ENCODE measurements at regions of chr4 and their contacts with region 1.

Region 1: GRCh38 chr4:40038972-40039371 is 17.7 kb upstream of the N4BP2 start:
- DNase-seq: no peak

Region 2: GRCh38 chr4:39855909-39856512 is 183.0 kb before region 1 on chr4:
- CTCF ChIA-PET with region 1: no interaction called
- POLR2A ChIA-PET with region 1: no interaction called
- DNase-seq: no peak

Region 3: GRCh38 chr4:40016007-40016406 is 23.0 kb before region 1 on chr4:
- CTCF ChIA-PET with region 1: interaction called, 10 read pairs
- POLR2A ChIA-PET with region 1: no interaction called
- DNase-seq: no peak

Measured in HEK293T (cell line).